GM10248 (cell line): ENCODE measurements at regions of chr2 and their contacts with region 1.

Region 1: GRCh38 chr2:17800219-17800618 is 16.0 kb upstream of the MSGN1 start:
- DNase-seq: no peak
- CTCF ChIP-seq: no peak

Region 2: DNA sequence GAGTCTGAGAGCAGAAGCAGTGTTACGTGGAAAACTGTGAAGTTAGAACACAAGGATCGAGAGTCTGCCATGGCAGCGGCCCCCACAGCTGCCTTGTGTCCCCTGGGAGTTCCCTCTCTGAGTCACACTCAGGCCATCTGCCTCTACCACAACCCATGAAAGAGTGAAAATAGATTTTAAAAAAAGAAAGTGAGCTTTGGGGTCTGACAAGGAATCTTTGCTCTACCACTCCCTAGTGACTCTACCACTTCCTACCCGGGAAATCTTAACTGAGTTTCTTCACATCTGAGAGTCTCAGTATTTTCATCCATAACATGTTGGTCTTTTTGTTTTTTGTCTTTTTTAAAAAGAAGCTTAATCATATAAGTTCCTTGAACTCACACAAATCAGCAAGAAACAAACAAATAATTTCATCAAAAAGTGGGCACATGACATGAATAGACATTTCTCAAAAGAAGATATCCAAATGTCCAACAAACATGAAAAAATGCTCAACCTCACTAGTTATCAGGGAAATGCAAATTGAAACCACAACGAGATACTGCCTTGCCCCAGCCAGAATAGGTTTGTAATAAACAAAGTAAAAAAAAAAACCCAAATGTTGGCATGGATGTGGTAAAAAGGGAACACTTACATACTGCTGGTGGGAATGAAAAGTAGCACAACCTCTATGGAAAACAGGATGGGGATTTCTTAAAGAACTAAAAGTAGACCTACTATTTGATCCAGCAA is 13.7 kb after region 1 on chr2:
- CTCF ChIA-PET with region 1: interaction called, 10 read pairs
- POLR2A ChIA-PET with region 1: no interaction called
- DNase-seq: peak; percentile 69
- CTCF ChIP-seq: no peak

Region 3: GRCh38 chr2:17962876-17963275 is 162.7 kb after region 1 on chr2:
- CTCF ChIA-PET with region 1: no interaction called
- POLR2A ChIA-PET with region 1: no interaction called
- DNase-seq: no peak
- CTCF ChIP-seq: no peak